PC-3 (cell line): ENCODE measurements at regions of chr11 and their contacts with region 1.

Region 1: GRCh38 chr11:28903716-28904115 is 795.5 kb downstream of the METTL15 start:
- DNase-seq: no peak
- ATAC-seq: no peak
- H3K4me3 ChIP-seq: no peak overlapping the region
- H3K27ac ChIP-seq: no peak overlapping the region
- H3K4me1 ChIP-seq: no peaks in the 10 kb centered on the region
- H3K27me3 ChIP-seq: no peaks in the 10 kb centered on the region
- CTCF ChIP-seq: no peak

Region 2: DNA sequence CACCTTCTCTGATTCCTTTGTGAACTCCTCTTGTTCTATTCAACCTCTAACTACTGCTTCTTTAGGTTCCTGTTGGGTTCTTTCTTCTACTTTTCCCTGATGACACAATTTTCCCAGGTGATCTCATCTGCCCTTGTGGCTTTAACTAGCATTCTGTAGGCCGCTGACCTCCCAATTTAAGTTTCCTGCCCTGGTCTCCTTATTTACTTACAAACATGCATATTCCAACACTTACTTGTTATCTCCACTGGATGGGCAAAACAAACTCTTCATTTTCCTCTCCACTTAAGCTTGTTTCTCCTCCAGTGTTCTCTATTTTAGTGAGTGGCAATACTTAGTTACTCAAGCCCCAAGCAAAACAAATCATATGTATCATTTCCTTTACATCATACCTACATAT is 61.0 kb before region 1 on chr11:
- CTCF ChIA-PET with region 1: no interaction called
- POLR2A ChIA-PET with region 1: no interaction called
- intact Hi-C with region 1: loop called (anchors 10 kb)
- DNase-seq: no peak
- ATAC-seq: no peak
- H3K4me3 ChIP-seq: no peak overlapping the region
- H3K27ac ChIP-seq: no peak overlapping the region
- H3K4me1 ChIP-seq: peaks cover 8% of the 10 kb centered on the region
- H3K27me3 ChIP-seq: no peaks in the 10 kb centered on the region
- CTCF ChIP-seq: no peak